ENCODE measurements at regions of chr1 and their contacts with region 1.

Region 1: DNA sequence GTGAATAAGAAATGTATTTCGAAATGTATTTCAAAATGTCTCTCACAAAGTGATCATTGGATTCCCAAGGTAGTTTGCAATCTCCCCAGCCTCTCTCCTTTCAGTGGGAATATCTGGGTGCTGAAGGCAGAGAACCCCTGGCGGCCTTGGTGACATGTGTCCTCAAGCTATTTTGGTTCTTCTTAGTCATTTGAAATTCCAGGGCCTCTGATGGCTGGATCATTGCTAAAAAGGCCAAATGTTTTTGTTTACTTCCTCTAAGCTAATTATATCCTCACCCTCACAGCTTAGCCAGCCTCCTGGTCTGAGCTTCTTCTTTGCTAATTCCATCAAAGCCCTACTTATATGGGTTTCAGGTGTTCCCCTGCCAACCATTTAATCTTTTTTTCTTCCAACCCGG is 71.2 kb downstream of the LRRC40 start:
- DNase-seq: no peak
- H3K4me3 ChIP-seq: peak overlapping the region in 1 of 4 experiments; percentile 17; a peak in 1 of 8 replicates
- H3K27ac ChIP-seq: no peak overlapping the region
- H3K4me1 ChIP-seq: peaks cover 2 to 6% (median 3%) of the 10 kb centered on the region in 4 experiments; a peak in 3 of 7 replicates
- H3K27me3 ChIP-seq: no peaks in the 10 kb centered on the region
- CTCF ChIP-seq: no peak
- EP300 ChIP-seq: no peak
- POLR2A ChIP-seq: no peak
- RAD21 ChIP-seq: no peak

Region 2: DNA sequence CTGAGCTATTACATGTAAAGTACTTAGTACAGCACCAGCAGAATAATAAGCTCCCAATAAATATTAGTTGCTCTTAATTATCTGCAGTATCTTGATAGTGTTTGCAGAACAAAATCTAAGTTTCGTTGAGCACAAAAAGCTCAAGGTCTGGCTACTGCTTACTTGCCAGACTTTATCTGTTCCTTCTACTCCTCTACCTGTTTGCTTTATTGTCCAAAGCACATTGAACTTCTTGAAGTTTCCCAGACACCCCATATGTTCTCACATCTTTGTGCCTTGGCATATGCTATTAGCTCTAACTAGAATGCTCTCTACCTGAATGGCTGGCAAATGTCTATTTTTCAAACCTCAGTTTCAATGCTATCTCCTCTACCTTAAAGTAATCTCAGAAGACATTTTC is 16.3 kb after region 1 on chr1:
- CTCF ChIA-PET with region 1: interaction called, 31 read pairs
- POLR2A ChIA-PET with region 1: no interaction called
- DNase-seq: no peak
- H3K4me3 ChIP-seq: no peak overlapping the region
- H3K27ac ChIP-seq: no peak overlapping the region
- H3K4me1 ChIP-seq: no peaks in the 10 kb centered on the region
- H3K27me3 ChIP-seq: no peaks in the 10 kb centered on the region
- CTCF ChIP-seq: no peak
- EP300 ChIP-seq: no peak
- POLR2A ChIP-seq: no peak
- RAD21 ChIP-seq: no peak

Measured in H1 (cell line).